PC-9 (cell line): ENCODE measurements at regions of chr14 and their contacts with region 1.

Region 1: DNA sequence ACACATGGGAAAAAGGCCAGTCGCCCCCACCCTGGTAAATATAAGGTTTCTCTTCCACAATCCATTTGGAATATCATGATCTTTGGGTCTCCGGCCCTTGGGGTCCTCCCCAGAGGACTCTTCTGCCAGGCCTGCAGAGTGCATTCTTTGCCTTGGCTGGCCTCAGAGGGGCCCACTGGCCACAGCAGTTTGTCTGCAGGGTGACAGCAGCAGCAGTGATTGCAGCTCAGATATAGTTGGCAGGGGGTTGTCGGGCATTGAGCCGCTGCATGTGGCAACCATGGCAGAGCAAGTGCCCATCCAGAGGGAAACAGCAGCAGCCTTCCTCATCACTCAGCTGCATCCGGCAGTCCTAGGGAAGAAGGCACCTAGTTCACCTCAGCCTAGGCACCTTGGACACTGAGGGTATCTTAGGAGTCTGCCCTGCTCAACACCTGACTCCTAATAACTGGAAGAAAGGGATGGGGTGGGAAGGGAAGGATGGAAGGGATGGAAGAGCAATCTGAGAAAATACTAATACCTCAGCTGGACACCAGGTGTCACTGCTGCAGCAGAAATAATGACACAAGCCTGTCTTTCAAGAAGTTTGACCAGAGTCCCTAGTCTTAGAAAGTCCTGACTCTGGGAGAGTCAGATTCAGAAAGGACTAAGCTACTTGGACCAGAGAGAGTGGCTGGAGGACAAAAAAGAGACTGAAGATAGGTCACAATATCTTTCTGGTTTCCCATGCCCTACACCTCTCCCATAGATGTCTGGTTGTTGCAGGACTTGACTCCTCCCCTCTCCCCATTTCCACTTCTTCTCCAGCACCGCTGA is 8.9 kb downstream of the AJUBA start:
- DNase-seq: peak in 1 of 2 experiments; percentile 44
- H3K4me3 ChIP-seq: no peak overlapping the region
- H3K27ac ChIP-seq: no peak overlapping the region
- H3K4me1 ChIP-seq: peaks cover 26% of the 10 kb centered on the region
- H3K27me3 ChIP-seq: no peaks in the 10 kb centered on the region
- CTCF ChIP-seq: peak; percentile 70

Region 2: GRCh38 chr14:22900081-22900799 is 73.2 kb before region 1 on chr14:
- CTCF ChIA-PET with region 1: no interaction called
- POLR2A ChIA-PET with region 1: no interaction called
- intact Hi-C with region 1: no loop called
- DNase-seq: peak; percentile 24 to 41
- H3K4me3 ChIP-seq: no peak overlapping the region
- H3K27ac ChIP-seq: no peak overlapping the region
- H3K4me1 ChIP-seq: peaks cover 15% of the 10 kb centered on the region
- H3K27me3 ChIP-seq: no peaks in the 10 kb centered on the region
- CTCF ChIP-seq: peak; percentile 62

Region 3: DNA sequence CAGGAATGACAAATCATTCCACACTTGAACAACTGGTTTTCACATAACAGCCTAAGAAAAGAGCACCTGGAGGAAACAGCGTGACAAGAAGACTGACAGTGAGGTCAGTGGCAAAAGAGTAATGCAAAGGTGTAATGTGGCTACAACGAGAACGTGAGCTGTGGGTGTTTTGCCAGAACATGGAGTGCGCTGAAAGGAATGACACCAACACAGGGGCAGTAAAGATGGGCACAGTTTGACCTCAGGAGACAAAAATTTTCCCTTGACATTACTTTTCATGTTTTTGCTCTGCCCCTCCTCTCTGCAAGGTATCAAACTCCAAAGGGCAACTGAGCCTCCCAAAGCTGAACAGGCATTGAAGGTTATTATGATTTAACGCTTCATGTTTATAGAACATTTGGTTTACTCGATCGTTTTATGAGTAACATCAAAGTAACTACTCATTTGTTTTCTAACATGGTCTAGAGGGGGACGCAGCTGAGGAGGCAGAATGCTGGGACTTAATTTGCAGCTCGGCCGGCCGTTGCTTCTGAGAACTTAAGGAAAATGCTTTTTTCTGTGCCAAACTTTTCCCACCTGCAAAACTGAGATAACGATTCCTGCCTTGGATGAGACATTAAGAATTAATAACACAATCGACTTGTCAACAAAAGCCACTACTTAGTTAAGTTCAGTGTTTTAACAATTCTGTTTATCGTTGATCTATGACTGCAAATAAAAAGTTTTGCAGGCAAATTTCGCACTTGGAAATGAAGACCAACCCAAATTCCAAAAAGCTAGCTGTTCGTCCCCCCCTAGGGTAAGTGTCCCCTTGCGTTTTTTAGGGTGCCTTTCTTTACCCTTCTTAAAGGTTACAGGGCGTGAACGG is 17.5 kb before region 1 on chr14:
- CTCF ChIA-PET with region 1: interaction called, 12 read pairs
- POLR2A ChIA-PET with region 1: interaction called, 22 read pairs
- intact Hi-C with region 1: no loop called
- DNase-seq: peak; percentile 28 to 79
- H3K4me3 ChIP-seq: peak overlapping the region; percentile 70
- H3K27ac ChIP-seq: peak overlapping the region; percentile 66
- H3K4me1 ChIP-seq: peaks cover 16% of the 10 kb centered on the region
- H3K27me3 ChIP-seq: no peaks in the 10 kb centered on the region
- CTCF ChIP-seq: no peak